Body of pancreas (tissue), 4 donors: ENCODE measurements at regions of chr3 and their contacts with region 1.

Region 1: GRCh38 chr3:98994128-98994762 is 92.8 kb upstream of the DCBLD2 start:
- DNase-seq: no peak
- ATAC-seq: peak; percentile 53
- H3K4me3 ChIP-seq: no peak overlapping the region
- H3K27ac ChIP-seq: no peak overlapping the region
- H3K4me1 ChIP-seq: no peaks in the 10 kb centered on the region
- H3K27me3 ChIP-seq: no peaks in the 10 kb centered on the region
- CTCF ChIP-seq: peak in 6 of 7 experiments; percentile 42 to 71 (median 62)
- POLR2A ChIP-seq: no peak

Region 2: GRCh38 chr3:98602078-98602678 is 392.1 kb before region 1 on chr3:
- intact Hi-C with region 1: loop called (anchors 10 kb)
- DNase-seq: peak; percentile 29 to 70 (median 50)
- ATAC-seq: peak; percentile 74
- H3K4me3 ChIP-seq: no peak overlapping the region
- H3K27ac ChIP-seq: no peak overlapping the region
- H3K4me1 ChIP-seq: no peaks in the 10 kb centered on the region
- H3K27me3 ChIP-seq: no peaks in the 10 kb centered on the region
- CTCF ChIP-seq: peak; percentile 55 to 81 (median 67)
- POLR2A ChIP-seq: no peak

Region 3: GRCh38 chr3:98821063-98821462 is 173.2 kb before region 1 on chr3:
- intact Hi-C with region 1: loop called (anchors 2 kb)
- DNase-seq: no peak
- ATAC-seq: no peak
- H3K4me3 ChIP-seq: no peak overlapping the region
- H3K27ac ChIP-seq: no peak overlapping the region
- H3K4me1 ChIP-seq: no peaks in the 10 kb centered on the region
- H3K27me3 ChIP-seq: no peaks in the 10 kb centered on the region
- CTCF ChIP-seq: no peak
- POLR2A ChIP-seq: no peak

Region 4: DNA sequence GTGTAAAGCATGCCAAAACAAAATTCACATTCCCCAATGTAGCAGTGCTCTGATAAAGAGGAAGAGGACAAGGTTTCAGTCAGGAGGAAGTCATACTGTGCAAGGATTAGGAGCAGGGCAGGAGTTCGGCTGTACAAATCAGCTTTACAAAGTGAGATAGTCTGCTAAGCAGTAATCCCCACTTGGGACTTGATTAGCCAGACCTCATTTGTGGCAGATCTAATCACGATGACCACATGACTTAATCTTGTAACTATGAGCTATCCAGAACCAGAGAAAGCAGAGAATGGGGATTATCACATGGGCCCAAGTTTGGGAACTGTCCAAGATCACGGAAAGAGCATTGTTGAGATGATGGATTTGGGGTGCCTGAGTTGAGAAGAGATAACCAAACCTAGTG is 100.5 kb before region 1 on chr3:
- intact Hi-C with region 1: no loop called
- DNase-seq: no peak
- ATAC-seq: no peak
- H3K4me3 ChIP-seq: no peak overlapping the region
- H3K27ac ChIP-seq: no peak overlapping the region
- H3K4me1 ChIP-seq: peaks cover 11% of the 10 kb centered on the region
- H3K27me3 ChIP-seq: no peaks in the 10 kb centered on the region
- CTCF ChIP-seq: no peak
- POLR2A ChIP-seq: no peak